Activated CD4-positive, alpha-beta memory T cell treated with anti-CD3 and anti-CD28 coated beads for 36 hours (primary cell): ENCODE measurements at regions of chr15 and their contacts with region 1.

Region 1: DNA sequence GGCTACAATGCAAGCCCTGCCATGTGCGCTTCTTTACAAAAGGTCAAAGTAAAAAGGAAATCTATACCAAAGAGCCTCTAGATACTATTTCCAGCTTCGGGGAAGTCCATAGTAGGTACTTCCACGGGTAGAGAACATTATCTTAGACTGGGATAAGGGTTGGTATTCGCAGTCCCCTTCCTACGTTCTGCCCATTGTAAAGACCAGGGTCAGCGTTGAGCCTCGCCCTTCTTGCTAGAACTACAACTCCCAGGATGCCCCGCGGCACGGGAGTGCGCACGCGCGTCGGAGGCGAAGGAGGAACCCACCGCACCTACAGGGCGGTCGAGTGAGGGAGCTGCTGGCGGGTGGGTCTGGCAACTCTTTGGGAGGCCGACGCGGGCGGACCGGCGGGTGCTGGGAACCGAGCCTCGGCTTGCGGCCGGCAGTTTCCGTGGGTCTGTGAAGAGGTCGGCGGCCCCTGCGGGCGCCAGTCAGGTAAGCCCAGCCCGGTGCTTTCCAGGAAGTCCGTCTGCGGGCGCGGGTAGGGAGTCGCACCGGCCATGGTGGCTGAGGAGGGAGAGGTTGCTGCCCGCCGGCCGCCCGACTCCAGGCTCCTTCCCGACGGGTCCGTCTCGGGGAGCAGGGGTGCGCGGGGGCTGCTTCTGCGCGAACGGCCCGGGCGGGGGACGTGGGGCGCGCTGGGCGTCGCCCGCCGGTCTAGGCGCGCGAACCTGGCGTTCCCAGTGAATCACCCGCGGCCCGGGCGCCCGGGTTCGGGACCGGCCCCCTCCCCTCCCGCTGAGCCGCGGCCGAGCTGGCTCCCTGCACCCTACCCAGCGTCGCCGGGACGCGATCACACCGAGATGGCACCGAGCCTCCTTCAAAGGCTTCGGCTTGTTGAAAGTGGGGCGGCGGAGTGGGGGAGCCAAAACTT is at the start of gene TMOD3:
- DNase-seq: peak; percentile 93
- H3K4me3 Mint-ChIP-seq: peak within 1 kb of the TSS; percentile 90
- H3K27ac Mint-ChIP-seq: peak within 1 kb of the TSS; percentile 90
- H3K4me1 Mint-ChIP-seq: peaks cover 44% of the 10 kb centered on the region
- H3K27me3 Mint-ChIP-seq: no peaks in the 10 kb centered on the region
- total RNA-seq, gene TMOD3: 56.9 to 61.6 TPM

Region 2: DNA sequence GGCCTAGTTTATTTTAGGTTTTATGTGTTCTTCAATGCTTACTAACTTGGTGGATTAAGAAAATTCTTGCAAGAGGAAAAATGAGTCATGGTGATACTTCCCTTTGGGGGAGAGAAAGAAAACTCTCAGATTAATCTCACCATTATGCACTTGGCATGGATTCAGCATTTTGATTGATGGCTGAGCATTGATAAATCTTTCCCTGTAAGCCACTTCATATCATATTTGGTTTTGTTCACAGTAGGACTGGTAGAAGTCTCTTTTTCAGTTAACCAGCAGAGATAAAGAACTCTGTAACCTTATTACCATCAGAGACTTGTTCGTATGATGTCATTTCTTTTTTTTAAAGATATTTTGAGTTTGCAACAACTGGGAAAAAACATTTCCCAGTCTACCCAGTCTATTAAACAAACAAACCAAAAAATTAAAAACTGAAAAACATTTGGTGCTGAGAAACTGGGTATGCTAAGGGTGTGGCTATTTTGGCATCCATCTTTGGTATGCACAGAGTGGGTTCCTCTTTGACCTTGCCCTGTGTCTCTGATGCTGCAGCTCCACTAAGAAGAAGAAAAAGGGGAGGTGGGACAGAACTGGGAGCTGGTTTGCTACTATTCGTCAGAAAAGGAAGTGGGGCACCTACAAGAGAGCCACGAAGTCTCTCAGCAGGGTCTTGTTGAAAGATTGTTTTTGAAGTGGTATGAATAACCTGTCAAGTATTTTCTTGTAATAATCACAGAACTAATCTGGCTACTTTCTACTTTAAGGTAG is 17.0 kb after region 1 on chr15:
- CTCF ChIA-PET with region 1: interaction called, 3 read pairs
- POLR2A ChIA-PET with region 1: interaction called, 4 read pairs
- intact Hi-C with region 1: loop called (anchors 1 kb)
- DNase-seq: no peak
- H3K4me3 Mint-ChIP-seq: no peak overlapping the region
- H3K27ac Mint-ChIP-seq: peak overlapping the region; percentile 61
- H3K4me1 Mint-ChIP-seq: peaks cover 71% of the 10 kb centered on the region
- H3K27me3 Mint-ChIP-seq: no peaks in the 10 kb centered on the region

Region 3: GRCh38 chr15:51861557-51862359 is 32.1 kb after region 1 on chr15:
- CTCF ChIA-PET with region 1: no interaction called
- POLR2A ChIA-PET with region 1: no interaction called
- intact Hi-C with region 1: loop called (anchors 1 kb)
- DNase-seq: peak; percentile 79
- H3K4me3 Mint-ChIP-seq: peak overlapping the region; percentile 36
- H3K27ac Mint-ChIP-seq: peak overlapping the region; percentile 61
- H3K4me1 Mint-ChIP-seq: peaks cover 66% of the 10 kb centered on the region
- H3K27me3 Mint-ChIP-seq: no peaks in the 10 kb centered on the region

Region 4: DNA sequence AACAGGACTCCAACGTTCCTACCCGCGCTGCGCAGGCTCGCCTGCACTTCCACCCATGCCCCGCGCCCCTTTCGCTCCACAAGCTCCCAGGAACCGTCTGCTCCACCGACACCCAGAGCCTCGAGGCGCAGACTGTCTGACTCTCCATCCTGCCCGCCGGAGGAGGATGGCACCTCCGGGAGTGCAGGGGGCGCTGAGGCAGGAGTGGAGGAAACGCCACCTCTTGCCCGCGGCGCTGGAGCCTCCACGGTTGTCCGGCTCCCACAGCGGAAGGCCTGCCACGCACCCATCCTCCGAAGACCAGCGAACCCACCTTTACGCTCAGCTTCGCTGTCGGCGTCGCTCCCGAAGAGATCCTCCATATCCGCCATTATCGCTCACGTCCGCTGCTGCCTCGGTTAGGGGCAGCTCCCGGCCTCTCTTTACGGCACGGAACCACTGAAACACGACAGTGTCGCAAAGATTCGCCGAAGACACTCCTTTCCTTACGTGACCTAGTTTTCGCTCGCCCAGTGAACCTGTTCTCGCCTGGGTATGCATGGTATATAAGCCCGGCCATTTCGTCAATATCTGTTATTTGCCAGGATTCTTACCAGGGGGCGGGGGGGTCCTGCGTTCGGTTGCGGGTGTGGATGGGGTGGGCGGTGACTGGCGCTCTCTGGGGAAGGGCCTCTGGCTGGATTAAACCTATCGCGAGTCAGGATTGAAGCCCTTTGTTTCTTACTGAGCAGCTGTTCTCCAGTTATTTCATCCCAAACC is 141.9 kb after region 1 on chr15 and contains the start of gene LEO1:
- CTCF ChIA-PET with region 1: no interaction called
- POLR2A ChIA-PET with region 1: no interaction called
- intact Hi-C with region 1: loop called (anchors 5 kb)
- DNase-seq: peak; percentile 93
- H3K4me3 Mint-ChIP-seq: peak within 1 kb of the TSS; percentile 96
- H3K27ac Mint-ChIP-seq: peak within 1 kb of the TSS; percentile 94
- H3K4me1 Mint-ChIP-seq: peaks cover 17% of the 10 kb centered on the region
- H3K27me3 Mint-ChIP-seq: peaks cover 2% of the 10 kb centered on the region
- total RNA-seq, gene LEO1: 27.3 to 28.3 TPM

Region 5: GRCh38 chr15:52018693-52019387 is 189.2 kb after region 1 on chr15 and contains the start of gene MAPK6:
- CTCF ChIA-PET with region 1: no interaction called
- POLR2A ChIA-PET with region 1: interaction called, 4 read pairs
- intact Hi-C with region 1: loop called (anchors 10 kb)
- DNase-seq: peak; percentile 95
- H3K4me3 Mint-ChIP-seq: peak within 1 kb of the TSS; percentile 98
- H3K27ac Mint-ChIP-seq: peak within 1 kb of the TSS; percentile 99
- H3K4me1 Mint-ChIP-seq: peaks cover 39% of the 10 kb centered on the region
- H3K27me3 Mint-ChIP-seq: no peaks in the 10 kb centered on the region
- total RNA-seq, gene MAPK6: 39.9 to 40.8 TPM

Region 6: DNA sequence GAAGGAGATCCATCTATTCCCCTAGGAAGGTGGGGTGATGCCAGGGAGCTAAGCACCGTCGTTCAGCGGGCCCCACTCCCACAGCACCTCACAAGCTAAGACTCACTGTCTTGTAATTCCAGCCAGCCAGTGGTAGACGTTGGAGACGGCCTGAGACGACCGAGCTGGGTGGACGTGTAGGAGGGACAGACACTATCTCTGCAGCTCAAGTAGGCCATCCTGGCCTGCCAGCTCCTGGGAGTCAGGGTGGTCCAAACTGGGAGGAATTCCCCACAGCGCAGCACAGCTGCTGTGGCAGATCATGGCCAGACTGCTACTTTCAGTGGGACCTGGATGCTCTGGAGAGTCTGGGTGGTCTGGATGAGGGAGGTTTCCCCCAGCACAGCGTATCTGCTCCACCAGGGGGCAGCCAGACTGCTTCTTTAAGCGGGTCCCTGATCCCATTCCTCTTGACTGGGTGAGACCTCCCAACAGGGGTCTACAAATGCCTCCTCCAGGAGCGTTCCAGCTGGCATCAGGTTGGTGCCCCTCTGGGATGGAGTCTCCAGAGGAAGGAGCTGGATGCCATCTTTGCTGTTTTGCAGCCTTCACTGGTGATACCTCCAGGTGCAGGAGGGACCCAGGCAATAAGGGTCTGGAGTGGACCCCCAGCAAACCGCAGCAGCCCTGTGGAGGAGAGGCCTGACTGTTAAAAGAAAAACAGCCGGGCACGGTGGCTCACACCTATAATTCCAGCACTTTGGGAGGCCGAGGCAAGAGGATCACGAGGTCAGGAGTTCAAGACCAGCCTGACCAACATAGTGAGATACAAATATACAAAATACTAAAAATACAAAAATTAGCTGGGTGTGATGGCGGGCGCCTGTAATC is 333.9 kb after region 1 on chr15:
- CTCF ChIA-PET with region 1: no interaction called
- POLR2A ChIA-PET with region 1: no interaction called
- intact Hi-C with region 1: loop called (anchors 10 kb)
- DNase-seq: no peak
- H3K4me3 Mint-ChIP-seq: no peak overlapping the region
- H3K27ac Mint-ChIP-seq: no peak overlapping the region
- H3K4me1 Mint-ChIP-seq: peaks cover 31% of the 10 kb centered on the region
- H3K27me3 Mint-ChIP-seq: no peaks in the 10 kb centered on the region

Region 7: GRCh38 chr15:52193791-52194190 is 364.2 kb after region 1 on chr15:
- CTCF ChIA-PET with region 1: no interaction called
- POLR2A ChIA-PET with region 1: no interaction called
- intact Hi-C with region 1: no loop called
- DNase-seq: no peak
- H3K4me3 Mint-ChIP-seq: no peak overlapping the region
- H3K27ac Mint-ChIP-seq: no peak overlapping the region
- H3K4me1 Mint-ChIP-seq: no peaks in the 10 kb centered on the region
- H3K27me3 Mint-ChIP-seq: no peaks in the 10 kb centered on the region